Heart left ventricle (tissue), 16 donors: ENCODE measurements at regions of chr6 and their contacts with region 1.

Region 1: GRCh38 chr6:56542364-56543331 is 100.0 kb downstream of the DST start:
- DNase-seq: peak; percentile 90 to 97 (median 92)
- ATAC-seq: peak; percentile 94 to 98 (median 96)
- H3K4me3 ChIP-seq: peak overlapping the region; percentile 6 to 72 (median 61)
- H3K27ac ChIP-seq: peak overlapping the region; percentile 80 to 92 (median 90)
- H3K4me1 ChIP-seq: peaks cover 6 to 62% (median 47%) of the 10 kb centered on the region in 12 donors
- H3K27me3 ChIP-seq: no peaks in the 10 kb centered on the region
- CTCF ChIP-seq: peak in 10 of 12 donors; percentile 23 to 73 (median 44)
- POLR2A ChIP-seq: peak in 1 of 2 donors; percentile 92

Region 2: DNA sequence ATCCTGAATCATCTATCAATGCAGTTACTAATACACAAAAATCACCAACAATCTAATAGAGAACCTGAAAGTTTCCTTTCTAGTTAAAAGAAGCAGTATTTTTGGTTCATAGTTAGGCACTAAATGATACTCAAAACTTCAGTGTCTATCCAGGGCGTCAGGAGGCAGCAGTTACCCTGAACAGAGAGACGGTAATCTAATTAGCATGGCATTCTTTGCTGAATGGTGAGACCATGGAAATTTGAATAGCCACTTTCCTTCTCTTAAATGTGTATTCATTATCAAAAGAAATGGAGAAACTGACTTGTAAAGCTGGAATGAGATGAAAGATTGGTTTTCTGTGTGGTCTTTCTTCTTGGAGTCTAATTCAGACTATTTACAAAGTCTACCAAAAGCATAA is 520.7 kb before region 1 on chr6:
- intact Hi-C with region 1: no loop called
- DNase-seq: no peak
- ATAC-seq: no peak
- H3K4me3 ChIP-seq: no peak overlapping the region
- H3K27ac ChIP-seq: no peak overlapping the region
- H3K4me1 ChIP-seq: peaks cover 0 to 3% (median 0%) of the 10 kb centered on the region in 12 donors
- H3K27me3 ChIP-seq: no peaks in the 10 kb centered on the region
- CTCF ChIP-seq: no peak
- POLR2A ChIP-seq: no peak

Region 3: DNA sequence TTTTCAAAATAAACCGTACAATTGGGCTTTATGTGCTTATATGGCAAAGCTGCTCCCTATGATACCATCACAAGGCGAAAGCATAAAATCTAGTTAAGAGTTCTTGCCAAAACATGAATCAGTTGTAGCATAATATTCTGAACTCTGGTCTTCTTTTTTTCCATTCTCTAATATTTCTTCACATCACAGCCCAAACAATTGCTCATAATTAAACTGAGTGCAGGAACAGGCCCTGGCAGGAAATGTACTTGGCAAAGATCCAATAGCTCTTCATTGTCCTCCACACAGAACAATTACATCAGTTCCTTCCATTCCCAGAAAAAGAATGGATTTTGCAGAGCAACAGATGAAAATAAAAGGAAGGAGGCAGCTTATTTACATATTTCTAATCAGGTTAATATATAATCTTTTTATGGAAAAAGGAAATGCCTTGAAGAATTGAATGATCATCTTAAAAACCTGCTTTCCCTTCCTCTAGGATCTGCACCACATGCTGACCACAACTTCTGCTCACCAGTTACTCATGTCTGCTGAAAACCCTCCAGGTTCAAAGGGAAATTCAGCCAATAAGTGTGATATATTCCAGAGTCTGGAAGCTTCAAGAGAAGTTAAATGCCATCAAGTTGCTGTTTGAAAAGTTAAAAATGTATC is 172.0 kb before region 1 on chr6:
- intact Hi-C with region 1: loop called in 4 of 10 experiments (anchors 1 to 10 kb)
- DNase-seq: peak in 4 of 5 donors; percentile 35 to 68 (median 64)
- ATAC-seq: peak; percentile 66 to 83 (median 80)
- H3K4me3 ChIP-seq: no peak overlapping the region
- H3K27ac ChIP-seq: peak overlapping the region; percentile 56 to 87 (median 76)
- H3K4me1 ChIP-seq: peaks cover 8 to 84% (median 56%) of the 10 kb centered on the region in 12 donors
- H3K27me3 ChIP-seq: no peaks in the 10 kb centered on the region
- CTCF ChIP-seq: no peak
- POLR2A ChIP-seq: no peak

Region 4: GRCh38 chr6:56451165-56451739 is 91.4 kb before region 1 on chr6:
- intact Hi-C with region 1: loop called in 1 of 10 experiments (anchors 10 kb)
- DNase-seq: peak; percentile 74 to 83 (median 81)
- ATAC-seq: peak; percentile 71 to 88 (median 78)
- H3K4me3 ChIP-seq: no peak overlapping the region
- H3K27ac ChIP-seq: peak overlapping the region; percentile 39 to 83 (median 70)
- H3K4me1 ChIP-seq: peaks cover 0 to 31% (median 14%) of the 10 kb centered on the region in 12 donors
- H3K27me3 ChIP-seq: no peaks in the 10 kb centered on the region
- CTCF ChIP-seq: no peak
- POLR2A ChIP-seq: no peak

Region 5: GRCh38 chr6:56475736-56476457 is 66.8 kb before region 1 on chr6:
- intact Hi-C with region 1: loop called in 4 of 10 experiments (anchors 5 to 10 kb)
- DNase-seq: peak in 4 of 5 donors; percentile 43 to 68 (median 52)
- ATAC-seq: peak; percentile 73 to 89 (median 86)
- H3K4me3 ChIP-seq: no peak overlapping the region
- H3K27ac ChIP-seq: peak overlapping the region in 4 of 12 donors; percentile 20 to 26 (median 22)
- H3K4me1 ChIP-seq: peaks cover 0 to 26% (median 15%) of the 10 kb centered on the region in 12 donors
- H3K27me3 ChIP-seq: no peaks in the 10 kb centered on the region
- CTCF ChIP-seq: no peak
- POLR2A ChIP-seq: no peak

Region 6: DNA sequence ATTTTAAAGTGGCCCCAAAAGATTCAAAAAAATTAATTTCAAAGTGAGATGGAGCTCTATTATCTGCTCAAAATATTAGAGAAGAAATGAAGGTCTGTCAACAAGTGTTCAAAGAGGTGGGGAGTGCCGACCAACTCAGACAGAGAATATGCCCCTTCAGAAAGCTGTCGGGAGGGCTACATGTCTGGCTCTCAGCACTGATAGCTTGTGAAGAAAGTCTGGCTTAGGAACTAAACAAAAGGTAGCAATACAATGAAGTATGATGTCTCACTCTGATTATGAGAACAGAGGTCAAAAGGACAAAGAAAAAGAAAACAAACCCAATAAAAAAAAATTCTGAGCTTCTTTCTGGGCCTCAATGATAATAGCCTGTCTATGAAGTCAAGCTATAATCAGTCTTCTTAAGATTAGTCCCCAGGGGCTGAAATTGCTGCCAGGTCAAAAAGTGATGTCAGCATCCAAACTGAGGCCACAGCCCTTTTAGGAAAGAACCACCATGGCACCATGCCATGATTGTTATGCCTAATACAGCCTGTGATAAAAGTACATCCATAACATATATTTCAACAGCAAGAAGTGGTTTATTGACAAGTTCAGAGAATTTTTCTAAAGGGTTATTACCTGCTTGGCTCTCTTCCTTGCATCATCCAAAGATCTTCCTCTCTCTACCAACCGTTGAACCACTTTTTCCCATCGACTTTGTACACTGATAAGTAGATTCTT is 50.9 kb before region 1 on chr6:
- intact Hi-C with region 1: loop called in 1 of 10 experiments (anchors 10 kb)
- DNase-seq: peak in 4 of 5 donors; percentile 69 to 78 (median 72)
- ATAC-seq: peak; percentile 74 to 90 (median 80)
- H3K4me3 ChIP-seq: no peak overlapping the region
- H3K27ac ChIP-seq: peak overlapping the region in 11 of 12 donors; percentile 6 to 71 (median 39)
- H3K4me1 ChIP-seq: peaks cover 0 to 25% (median 13%) of the 10 kb centered on the region in 12 donors
- H3K27me3 ChIP-seq: no peaks in the 10 kb centered on the region
- CTCF ChIP-seq: no peak
- POLR2A ChIP-seq: no peak

Region 7: GRCh38 chr6:56507517-56507916 is 35.1 kb before region 1 on chr6:
- intact Hi-C with region 1: loop called in 3 of 10 experiments (anchors 5 kb)
- DNase-seq: peak in 4 of 5 donors; percentile 59 to 75 (median 62)
- ATAC-seq: peak; percentile 59 to 76 (median 76)
- H3K4me3 ChIP-seq: no peak overlapping the region
- H3K27ac ChIP-seq: peak overlapping the region; percentile 22 to 86 (median 74)
- H3K4me1 ChIP-seq: peaks cover 0 to 74% (median 36%) of the 10 kb centered on the region in 12 donors
- H3K27me3 ChIP-seq: no peaks in the 10 kb centered on the region
- CTCF ChIP-seq: no peak
- POLR2A ChIP-seq: no peak